ENCODE measurements at regions of chr6 and their contacts with region 1.

Region 1: DNA sequence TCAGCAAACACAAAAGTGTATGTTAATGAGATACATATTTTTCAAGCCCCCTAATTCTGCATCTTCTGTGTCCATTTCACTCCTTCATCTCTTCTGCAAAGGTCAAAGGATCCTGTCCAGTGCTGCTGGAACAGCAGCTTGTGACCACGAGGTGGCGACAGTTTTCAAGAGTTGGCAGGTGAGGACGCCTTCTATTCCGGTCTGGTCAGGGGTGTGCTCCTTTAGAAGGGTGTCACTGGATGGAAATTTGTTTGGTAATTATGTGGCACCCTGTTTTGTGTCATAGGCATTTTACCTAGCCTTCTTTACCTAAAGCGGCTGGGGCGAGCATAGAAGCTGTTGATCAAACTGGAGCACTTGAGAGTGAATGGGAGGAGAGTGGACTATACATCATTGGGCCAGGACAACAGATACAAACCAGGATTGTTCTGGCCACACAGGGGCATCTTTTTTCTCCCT is 32.9 kb upstream of the ERVFRD-1 start:
- DNase-seq: no peak
- H3K4me3 ChIP-seq: no peak overlapping the region
- H3K27me3 ChIP-seq: no peaks in the 10 kb centered on the region
- CTCF ChIP-seq: peak; percentile 88

Region 2: GRCh38 chr6:11009353-11009752 is 135.1 kb before region 1 on chr6:
- CTCF ChIA-PET with region 1: no interaction called
- POLR2A ChIA-PET with region 1: no interaction called
- DNase-seq: no peak
- H3K4me3 ChIP-seq: no peak overlapping the region
- H3K27me3 ChIP-seq: no peaks in the 10 kb centered on the region
- CTCF ChIP-seq: no peak

Region 3: GRCh38 chr6:11155589-11155988 is 11.2 kb after region 1 on chr6:
- CTCF ChIA-PET with region 1: interaction called, 17 read pairs
- POLR2A ChIA-PET with region 1: no interaction called
- DNase-seq: no peak
- H3K4me3 ChIP-seq: no peak overlapping the region
- H3K27me3 ChIP-seq: no peaks in the 10 kb centered on the region
- CTCF ChIP-seq: no peak

Measured in BJ (cell line).